ENCODE measurements at regions of chr16 and their contacts with region 1.

Region 1: GRCh38 chr16:21574381-21574780 is 25.0 kb upstream of the METTL9 start:
- DNase-seq: no peak
- ATAC-seq: no peak
- H3K4me3 ChIP-seq: no peak overlapping the region
- H3K27ac ChIP-seq: no peak overlapping the region
- H3K4me1 ChIP-seq: no peaks in the 10 kb centered on the region
- H3K27me3 ChIP-seq: peaks cover 5% of the 10 kb centered on the region
- CTCF ChIP-seq: no peak

Region 2: DNA sequence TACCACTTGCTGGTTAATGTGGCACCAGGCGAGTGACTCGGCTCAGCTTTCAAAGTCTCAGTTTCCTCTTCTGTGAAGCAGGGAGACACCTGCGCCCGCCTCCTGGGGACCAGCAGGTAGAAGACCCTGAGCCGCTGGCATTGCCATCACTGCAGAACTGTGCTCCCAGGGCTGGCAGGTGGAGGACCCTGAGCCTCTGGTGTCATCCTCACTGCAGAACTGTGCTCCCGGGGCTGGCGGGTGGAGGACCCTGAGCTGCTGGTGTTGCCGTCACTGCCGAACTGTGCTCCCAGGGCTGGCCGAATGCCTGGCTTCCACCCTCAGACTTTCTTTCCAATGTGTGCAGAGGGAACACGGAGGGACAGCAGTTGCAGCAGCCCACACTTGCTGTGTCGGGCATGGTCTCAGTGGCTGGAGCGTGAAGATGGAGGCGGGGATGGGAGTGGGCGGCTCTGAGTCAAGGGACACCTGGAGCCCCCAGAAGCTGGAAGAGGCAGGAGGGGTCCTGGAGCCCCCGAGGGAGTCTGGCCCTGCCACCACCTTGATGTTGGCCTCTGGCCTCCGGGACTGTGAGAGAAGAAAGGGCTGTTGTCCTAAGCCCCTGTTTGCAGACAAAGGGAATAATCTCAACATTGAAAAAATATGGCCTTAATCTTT is 50.8 kb before region 1 on chr16:
- intact Hi-C with region 1: loop called (anchors 10 kb)
- DNase-seq: no peak
- ATAC-seq: no peak
- H3K4me3 ChIP-seq: no peak overlapping the region
- H3K27ac ChIP-seq: no peak overlapping the region
- H3K4me1 ChIP-seq: no peaks in the 10 kb centered on the region
- H3K27me3 ChIP-seq: no peaks in the 10 kb centered on the region
- CTCF ChIP-seq: no peak